ENCODE measurements at regions of chr11 and their contacts with region 1.

Region 1: DNA sequence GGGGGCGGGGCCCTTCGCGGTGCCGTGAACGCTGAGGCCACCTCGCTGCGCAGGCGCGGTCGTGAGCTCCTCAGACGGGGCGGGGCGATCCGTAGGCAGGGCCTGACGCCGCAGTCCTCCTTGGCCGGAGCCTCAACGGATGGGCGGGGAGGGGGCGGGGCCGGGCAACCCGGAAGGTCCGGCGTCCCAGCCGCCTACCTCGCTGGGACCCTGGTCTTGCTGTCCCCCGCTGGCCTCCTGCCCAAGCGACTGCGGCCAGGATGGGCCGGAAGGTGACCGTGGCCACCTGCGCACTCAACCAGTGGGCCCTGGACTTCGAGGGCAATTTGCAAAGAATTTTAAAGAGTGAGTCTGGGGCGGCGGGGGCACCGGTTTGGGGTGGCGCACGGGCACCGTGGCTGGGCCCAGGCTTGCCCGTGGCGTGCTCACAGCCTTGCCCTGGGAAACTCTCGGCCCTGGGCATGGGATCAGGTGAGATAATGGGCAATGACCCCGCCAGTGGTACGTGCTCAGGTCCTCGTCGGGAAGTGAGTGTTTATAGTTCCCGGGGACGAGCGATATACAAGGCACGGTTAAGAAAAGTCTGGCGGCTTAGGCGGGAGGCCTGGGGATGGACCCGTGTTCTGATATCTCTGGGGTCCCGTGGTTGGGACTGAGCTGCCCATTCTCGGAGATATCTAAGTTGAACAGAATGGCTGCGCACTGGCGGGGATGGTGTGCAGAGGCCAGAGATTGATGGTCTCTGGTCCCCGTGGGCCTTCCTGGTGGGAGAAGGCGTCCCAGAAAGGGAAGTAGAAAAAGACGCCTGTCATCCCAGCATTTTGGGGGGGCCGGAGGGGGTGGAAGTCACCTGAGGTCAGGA is at the start of gene NADSYN1:
- DNase-seq: peak; percentile 82 to 98 (median 90)
- ATAC-seq: peak; percentile 71 to 81 (median 76)
- H3K4me3 ChIP-seq: peak within 1 kb of the TSS; percentile 97
- H3K4me3 Mint-ChIP-seq: peak within 1 kb of the TSS; percentile 86 to 92 (median 88)
- H3K27ac ChIP-seq: peak within 1 kb of the TSS; percentile 98
- H3K27ac Mint-ChIP-seq: peak within 1 kb of the TSS; percentile 94 to 96
- H3K4me1 ChIP-seq: peaks cover 23 to 49% of the 10 kb centered on the region in 2 experiments
- H3K4me1 Mint-ChIP-seq: peaks cover 58 to 72% (median 66%) of the 10 kb centered on the region in 3 donors
- H3K27me3 ChIP-seq: no peaks in the 10 kb centered on the region
- H3K27me3 Mint-ChIP-seq: no peaks in the 10 kb centered on the region
- total RNA-seq, gene NADSYN1: 125 to 190 (median 162) TPM

Region 2: GRCh38 chr11:72222907-72223614 is 769.8 kb after region 1 on chr11:
- CTCF ChIA-PET with region 1: interaction called in 1 of 2 experiments, 11 read pairs
- POLR2A ChIA-PET with region 1: no interaction called
- DNase-seq: peak; percentile 81 to 96 (median 90)
- ATAC-seq: peak; percentile 80 to 83 (median 82)
- H3K4me3 ChIP-seq: peak overlapping the region; percentile 84 to 92
- H3K4me3 Mint-ChIP-seq: peak overlapping the region; percentile 88 to 93 (median 88)
- H3K27ac ChIP-seq: peak overlapping the region; percentile 78
- H3K27ac Mint-ChIP-seq: peak overlapping the region; percentile 95
- H3K4me1 ChIP-seq: peaks cover 4 to 37% of the 10 kb centered on the region in 2 experiments
- H3K4me1 Mint-ChIP-seq: peaks cover 28 to 39% (median 33%) of the 10 kb centered on the region in 3 donors
- H3K27me3 ChIP-seq: peaks cover 0 to 9% of the 10 kb centered on the region in 2 experiments
- H3K27me3 Mint-ChIP-seq: peaks cover 3 to 4% of the 10 kb centered on the region in 2 donors

Measured in T-cell (primary cell).